ENCODE measurements at regions of chr22 and their contacts with region 1.

Region 1: GRCh38 chr22:30667494-30668385 is at the start of gene DUSP18:
- DNase-seq: peak; percentile 59
- H3K4me3 ChIP-seq: peak within 1 kb of the TSS; percentile 90
- H3K27ac ChIP-seq: peak within 1 kb of the TSS; percentile 31
- H3K27me3 ChIP-seq: no peaks in the 10 kb centered on the region
- CTCF ChIP-seq: peak; percentile 36
- polyA plus RNA-seq, gene DUSP18: 13.8 and 14.5 TPM in 2 replicates

Region 2: DNA sequence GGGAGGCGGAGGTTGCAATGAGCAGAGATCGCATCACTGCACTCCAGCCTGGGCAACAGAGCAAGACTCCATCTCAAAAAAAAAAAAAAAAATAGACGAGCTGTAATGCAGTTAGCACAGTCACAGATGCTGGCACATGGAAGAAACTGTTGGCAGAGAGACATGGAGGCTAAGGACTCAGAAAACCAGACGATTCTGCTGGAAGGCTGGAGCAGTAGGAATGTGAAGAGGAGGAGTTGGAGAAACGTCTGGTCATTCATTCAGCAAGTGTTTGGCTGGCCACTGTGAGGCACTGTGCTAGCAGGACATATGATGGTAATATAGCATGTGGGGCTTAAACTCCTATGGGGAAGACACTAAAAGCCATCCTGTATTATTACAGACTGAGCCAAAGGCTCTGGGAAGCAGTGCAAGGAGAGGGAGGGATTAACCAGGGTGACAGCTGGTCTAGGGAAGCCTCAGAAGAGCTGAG is 895.5 kb before region 1 on chr22:
- CTCF ChIA-PET with region 1: interaction called, 14 read pairs
- POLR2A ChIA-PET with region 1: no interaction called
- DNase-seq: peak; percentile 38
- H3K4me3 ChIP-seq: no peak overlapping the region
- H3K27ac ChIP-seq: no peak overlapping the region
- H3K27me3 ChIP-seq: no peaks in the 10 kb centered on the region
- CTCF ChIP-seq: peak; percentile 66

Region 3: GRCh38 chr22:30538280-30538679 is 129.5 kb before region 1 on chr22:
- CTCF ChIA-PET with region 1: no interaction called
- POLR2A ChIA-PET with region 1: no interaction called
- DNase-seq: no peak
- H3K4me3 ChIP-seq: no peak overlapping the region
- H3K27ac ChIP-seq: no peak overlapping the region
- H3K27me3 ChIP-seq: peaks cover 15% of the 10 kb centered on the region
- CTCF ChIP-seq: no peak

Region 4: GRCh38 chr22:30926706-30927105 is 259.0 kb after region 1 on chr22:
- CTCF ChIA-PET with region 1: no interaction called
- POLR2A ChIA-PET with region 1: interaction called, 16 read pairs
- DNase-seq: no peak
- H3K4me3 ChIP-seq: no peak overlapping the region
- H3K27ac ChIP-seq: no peak overlapping the region
- H3K27me3 ChIP-seq: no peaks in the 10 kb centered on the region
- CTCF ChIP-seq: no peak